Gastrocnemius medialis (tissue), 4 donors: ENCODE measurements at regions of chr6 and their contacts with region 1.

Region 1: GRCh38 chr6:133973109-133973971 is 20.3 kb downstream of the TBPL1 start:
- DNase-seq: no peak
- ATAC-seq: peak in 1 of 2 donors; percentile 60
- H3K4me3 ChIP-seq: no peak overlapping the region
- H3K27ac ChIP-seq: no peak overlapping the region
- H3K4me1 ChIP-seq: peaks cover 10 to 22% of the 10 kb centered on the region in 2 donors
- H3K27me3 ChIP-seq: no peaks in the 10 kb centered on the region
- CTCF ChIP-seq: peak; percentile 60 to 80 (median 74)
- POLR2A ChIP-seq: no peak

Region 2: GRCh38 chr6:134058622-134059366 is 85.5 kb after region 1 on chr6:
- in situ Hi-C with region 1: loop called in 3 of 4 experiments (anchors 5 to 10 kb)
- intact Hi-C with region 1: loop called (anchors 1 kb)
- DNase-seq: no peak
- ATAC-seq: no peak
- H3K4me3 ChIP-seq: no peak overlapping the region
- H3K27ac ChIP-seq: no peak overlapping the region
- H3K4me1 ChIP-seq: peaks cover 7 to 14% of the 10 kb centered on the region in 2 donors
- H3K27me3 ChIP-seq: no peaks in the 10 kb centered on the region
- CTCF ChIP-seq: no peak
- POLR2A ChIP-seq: no peak

Region 3: DNA sequence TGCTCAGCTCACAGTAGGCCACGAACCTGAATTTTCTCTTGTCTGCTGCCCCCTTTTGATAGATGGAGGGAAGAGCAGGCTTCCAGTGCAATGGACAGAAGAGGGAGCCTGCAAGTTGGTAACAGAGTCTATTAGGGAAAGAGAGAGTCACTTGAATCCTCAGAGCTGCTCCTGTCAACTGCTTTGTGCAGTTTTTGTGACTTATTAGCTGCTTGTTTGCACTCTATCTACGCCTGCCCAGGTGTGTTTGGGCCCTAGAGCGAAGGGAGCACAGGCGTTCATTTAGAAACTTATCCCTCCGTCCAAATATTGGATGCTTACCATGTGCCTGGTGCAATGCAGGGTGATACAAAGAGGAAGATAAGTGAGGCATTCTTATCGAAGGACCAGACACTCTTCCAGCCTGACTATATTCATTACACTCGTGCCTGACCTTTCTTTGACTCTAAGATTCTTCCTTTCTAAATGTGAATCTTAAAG is 90.7 kb after region 1 on chr6:
- in situ Hi-C with region 1: loop called (anchors 5 to 10 kb)
- intact Hi-C with region 1: loop called (anchors 1 kb)
- DNase-seq: peak; percentile 25 to 69
- ATAC-seq: peak; percentile 98
- H3K4me3 ChIP-seq: no peak overlapping the region
- H3K27ac ChIP-seq: peak overlapping the region in 3 of 4 donors; percentile 34 to 77 (median 50)
- H3K4me1 ChIP-seq: peaks cover 7 to 8% of the 10 kb centered on the region in 2 donors
- H3K27me3 ChIP-seq: no peaks in the 10 kb centered on the region
- CTCF ChIP-seq: peak; percentile 54 to 89 (median 75)
- POLR2A ChIP-seq: no peak